Stomach (tissue), 19 donors: ENCODE measurements at regions of chr11 and their contacts with region 1.

Region 1: GRCh38 chr11:8813658-8814057 is 97.3 kb upstream of the AKIP1 start:
- DNase-seq: peak; percentile 71 to 93
- H3K4me3 ChIP-seq: no peak overlapping the region
- H3K27ac ChIP-seq: peak overlapping the region; percentile 71 to 98 (median 92)
- H3K4me1 ChIP-seq: peaks cover 32 to 55% (median 42%) of the 10 kb centered on the region in 4 donors
- H3K27me3 ChIP-seq: no peaks in the 10 kb centered on the region
- CTCF ChIP-seq: peak in 5 of 7 experiments; percentile 52 to 83 (median 80)
- EP300 ChIP-seq: no peak
- POLR2A ChIP-seq: no peak

Region 2: GRCh38 chr11:8699903-8700302 is 113.8 kb before region 1 on chr11:
- intact Hi-C with region 1: loop called (anchors 10 kb)
- DNase-seq: peak in 1 of 2 donors; percentile 71
- H3K4me3 ChIP-seq: no peak overlapping the region
- H3K27ac ChIP-seq: peak overlapping the region in 4 of 5 donors; percentile 54 to 94 (median 68)
- H3K4me1 ChIP-seq: peaks cover 0 to 63% (median 21%) of the 10 kb centered on the region in 4 donors
- H3K27me3 ChIP-seq: no peaks in the 10 kb centered on the region
- CTCF ChIP-seq: no peak
- EP300 ChIP-seq: no peak
- POLR2A ChIP-seq: no peak